BJ (cell line): ENCODE measurements at regions of chr4 and their contacts with region 1.

Region 1: GRCh38 chr4:147019061-147019460 is 73.4 kb upstream of the TTC29 start:
- DNase-seq: no peak
- H3K4me3 ChIP-seq: no peak overlapping the region
- H3K27me3 ChIP-seq: no peaks in the 10 kb centered on the region; the same call in 1 of the 2 replicates
- CTCF ChIP-seq: peak; percentile 70

Region 2: DNA sequence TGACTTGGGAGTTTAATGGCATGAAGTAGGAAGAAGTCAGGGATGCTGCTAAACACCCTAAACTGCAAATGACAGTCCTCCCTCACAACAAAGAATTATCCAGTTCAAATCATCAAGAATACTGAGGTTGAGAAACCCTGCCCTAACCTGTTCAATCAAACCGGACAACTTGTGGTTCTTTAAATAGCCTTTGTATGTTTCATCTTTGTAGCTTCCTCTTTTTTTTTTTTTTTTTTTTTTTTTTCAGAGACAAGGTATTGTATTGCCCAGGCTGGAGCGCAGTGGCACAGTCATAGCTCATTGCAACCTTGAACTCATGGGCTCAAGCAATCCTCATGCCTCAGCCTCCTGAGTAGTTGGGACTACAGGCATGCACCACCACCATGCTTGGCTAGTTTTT is 20.9 kb before region 1 on chr4:
- CTCF ChIA-PET with region 1: no interaction called
- POLR2A ChIA-PET with region 1: no interaction called
- DNase-seq: no peak
- H3K4me3 ChIP-seq: no peak overlapping the region
- H3K27me3 ChIP-seq: no peaks in the 10 kb centered on the region
- CTCF ChIP-seq: no peak

Region 3: GRCh38 chr4:147029296-147029695 is 10.2 kb after region 1 on chr4:
- CTCF ChIA-PET with region 1: interaction called, 13 read pairs
- POLR2A ChIA-PET with region 1: no interaction called
- DNase-seq: no peak
- H3K4me3 ChIP-seq: no peak overlapping the region
- H3K27me3 ChIP-seq: 0 out of 2 replicates have a peak, but pooled peaks cover 2% of the 10 kb centered on the region
- CTCF ChIP-seq: no peak

Region 4: DNA sequence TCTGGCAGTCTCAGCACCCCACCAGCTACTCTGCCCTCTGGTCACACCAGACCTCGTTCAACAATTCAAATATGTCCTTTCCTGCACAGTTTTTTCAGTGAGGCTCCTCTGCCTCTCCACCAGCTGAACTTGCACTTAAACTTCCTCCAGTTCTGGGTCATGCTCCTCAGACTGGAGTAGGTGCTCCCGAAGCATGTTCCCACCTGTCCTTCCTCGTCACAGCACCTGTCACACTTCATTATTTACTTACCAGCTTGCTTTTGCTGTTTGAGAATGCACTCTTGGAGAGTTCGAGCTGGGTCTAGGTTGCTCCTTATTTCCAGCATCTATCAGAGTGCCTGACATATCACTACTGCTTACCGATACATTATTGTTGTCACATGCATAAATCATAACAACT is 71.4 kb after region 1 on chr4:
- CTCF ChIA-PET with region 1: interaction called, 13 read pairs
- POLR2A ChIA-PET with region 1: no interaction called
- DNase-seq: no peak
- H3K4me3 ChIP-seq: no peak overlapping the region
- H3K27me3 ChIP-seq: no peaks in the 10 kb centered on the region
- CTCF ChIP-seq: no peak

Region 5: DNA sequence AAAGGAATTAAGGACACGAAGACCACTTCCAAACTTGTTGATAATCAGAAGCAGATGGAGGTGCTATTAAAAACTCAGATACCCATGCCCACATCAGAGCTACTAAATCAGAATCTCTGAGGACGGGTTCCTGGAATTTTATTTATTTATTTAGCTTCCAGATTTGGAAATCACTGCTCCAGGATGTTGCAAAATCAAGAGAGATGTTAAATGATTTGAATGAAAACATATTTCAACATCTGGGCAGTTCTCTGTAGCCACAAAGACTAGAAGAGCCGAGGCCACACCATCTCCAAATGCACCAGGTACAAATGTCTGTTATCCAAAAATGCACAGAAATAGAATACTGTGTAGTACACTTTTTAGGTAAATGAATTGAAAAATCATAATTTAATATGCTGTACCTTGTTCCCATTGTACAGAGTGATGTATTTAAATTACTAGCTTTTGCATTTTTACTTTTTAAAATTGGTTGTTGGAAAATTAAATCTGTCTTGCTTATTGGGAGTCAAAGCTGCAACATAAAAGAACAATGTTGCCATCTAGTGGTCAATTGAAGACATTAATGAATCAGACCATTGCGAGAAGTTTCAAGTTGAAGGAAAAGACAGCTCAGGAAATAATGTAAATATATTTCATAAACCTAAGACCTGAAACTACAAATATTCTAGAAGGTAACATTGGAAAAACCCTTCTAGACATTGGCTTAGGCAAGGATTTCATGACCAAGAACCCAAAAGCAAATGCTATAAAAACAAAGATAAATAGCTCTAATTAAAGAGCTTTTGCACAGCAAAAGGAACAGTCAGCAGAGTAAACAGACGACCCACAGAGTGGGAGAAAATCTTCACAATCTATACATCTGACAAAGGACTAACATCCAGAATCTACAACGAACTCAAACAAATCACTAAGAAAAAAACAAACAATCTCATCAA is 77.9 kb after region 1 on chr4:
- CTCF ChIA-PET with region 1: interaction called, 79 read pairs
- POLR2A ChIA-PET with region 1: interaction called, 3 read pairs
- DNase-seq: no peak
- H3K4me3 ChIP-seq: no peak overlapping the region
- H3K27me3 ChIP-seq: 0 out of 2 replicates have a peak, but pooled peaks cover 2% of the 10 kb centered on the region
- CTCF ChIP-seq: peak; percentile 49

Region 6: DNA sequence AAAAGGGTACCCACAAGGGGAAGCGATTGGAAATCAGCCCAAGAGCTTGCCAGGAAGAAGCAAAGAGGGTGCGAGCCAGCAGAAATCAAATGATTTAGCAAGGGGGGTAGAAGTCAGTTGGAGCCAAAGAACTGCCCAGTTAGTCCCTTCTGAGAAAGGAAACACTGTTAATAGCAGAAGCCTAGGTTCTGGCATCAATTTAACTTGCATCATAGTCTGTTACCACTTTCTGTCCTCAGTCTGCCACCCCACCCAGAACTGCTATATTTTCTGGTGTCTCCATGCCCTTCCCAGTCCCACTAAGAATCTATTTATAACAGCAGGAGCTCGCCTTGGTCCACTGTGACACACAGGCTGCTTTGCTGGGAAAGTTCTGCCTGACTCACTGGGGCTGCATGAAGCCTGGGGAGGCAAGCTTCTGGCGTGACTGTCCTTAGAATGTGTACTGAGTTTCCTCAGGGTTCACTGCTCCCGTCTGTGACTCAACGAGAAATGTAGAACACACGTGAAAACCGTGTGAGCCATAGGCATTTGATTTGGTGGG is 84.4 kb after region 1 on chr4:
- CTCF ChIA-PET with region 1: interaction called, 57 read pairs
- POLR2A ChIA-PET with region 1: no interaction called
- DNase-seq: peak; percentile 97
- H3K4me3 ChIP-seq: no peak overlapping the region
- H3K27me3 ChIP-seq: 0 out of 2 replicates have a peak, but pooled peaks cover 2% of the 10 kb centered on the region
- CTCF ChIP-seq: no peak

Region 7: DNA sequence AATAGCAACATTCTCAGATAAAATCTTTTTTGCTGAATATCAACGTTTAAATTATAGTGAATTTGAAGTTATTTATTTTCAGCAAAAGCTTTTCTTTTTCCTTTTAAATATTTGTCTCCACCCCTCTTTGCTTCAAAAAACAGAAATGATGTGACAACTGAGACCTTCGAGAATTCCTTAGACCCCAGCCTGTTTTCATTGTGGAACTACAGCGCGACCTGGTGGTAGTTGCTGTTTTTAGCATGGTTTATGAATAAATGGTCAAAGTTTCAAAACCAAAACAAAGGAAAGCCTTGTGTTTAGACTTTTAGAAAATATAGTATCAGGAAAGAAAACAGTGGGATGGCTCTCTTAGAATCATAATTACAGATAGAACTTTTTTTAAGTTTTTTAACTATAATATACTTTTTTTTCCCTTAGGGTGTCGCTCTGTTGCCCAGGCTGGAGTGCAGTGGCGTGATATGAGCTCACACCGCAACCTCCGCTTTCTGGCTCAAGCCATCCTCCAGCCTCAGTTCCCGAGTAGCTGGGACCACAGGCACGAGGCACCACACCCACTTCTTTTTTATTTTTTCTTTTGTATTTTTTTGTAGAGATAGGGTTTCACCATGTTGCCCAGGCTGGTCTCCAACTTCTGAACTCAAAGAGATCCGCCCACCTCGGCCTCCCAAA is 571.3 kb after region 1 on chr4:
- CTCF ChIA-PET with region 1: interaction called, 26 read pairs
- POLR2A ChIA-PET with region 1: no interaction called
- DNase-seq: no peak
- H3K4me3 ChIP-seq: no peak overlapping the region
- H3K27me3 ChIP-seq: no peaks in the 10 kb centered on the region
- CTCF ChIP-seq: peak; percentile 71